ENCODE measurements at regions of chr5 and their contacts with region 1.

Region 1: DNA sequence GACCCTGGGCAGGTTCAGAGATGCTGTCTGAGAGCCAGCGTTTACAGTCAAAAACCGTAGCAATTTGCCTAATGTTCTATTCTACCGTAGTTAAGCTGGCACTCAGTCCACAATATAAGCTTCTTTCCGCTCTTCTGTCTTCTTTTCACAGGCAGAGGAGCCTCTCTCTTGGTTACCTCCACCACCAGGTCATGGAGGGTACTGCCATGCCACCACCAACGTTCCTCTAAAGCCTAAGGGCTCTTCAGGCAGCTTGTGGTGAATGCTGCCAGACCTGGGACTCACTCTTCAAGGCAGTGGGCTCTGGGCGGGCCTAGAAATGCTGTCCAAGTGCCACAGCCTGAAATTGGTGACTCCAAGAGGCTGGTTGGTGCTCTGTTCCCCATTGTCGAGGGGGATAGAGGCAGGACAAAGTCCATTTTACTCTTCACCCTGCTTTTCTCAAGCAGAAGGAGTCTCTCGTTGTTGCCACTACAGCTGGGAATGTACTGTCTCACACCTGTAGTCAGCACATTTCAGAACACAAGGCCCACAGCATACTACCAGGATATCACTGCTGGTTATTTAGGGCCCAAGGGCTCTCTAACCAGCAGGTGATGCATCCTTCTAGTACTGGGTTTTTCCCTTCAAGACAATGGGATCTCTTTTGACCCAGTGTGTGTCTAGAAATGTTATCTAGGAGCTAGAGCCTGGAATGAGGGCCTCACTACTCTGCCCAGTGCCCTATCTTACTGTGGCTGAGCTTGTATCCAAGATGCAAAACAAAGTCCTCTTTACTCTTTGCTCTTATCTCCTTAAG is 235.3 kb upstream of the PRR16 start:
- DNase-seq: no peak
- H3K4me3 ChIP-seq: no peak overlapping the region
- H3K27ac ChIP-seq: no peak overlapping the region
- H3K4me1 ChIP-seq: no peaks in the 10 kb centered on the region
- H3K27me3 ChIP-seq: no peaks in the 10 kb centered on the region
- CTCF ChIP-seq: no peak
- EP300 ChIP-seq: no peak
- POLR2A ChIP-seq: no peak

Region 2: DNA sequence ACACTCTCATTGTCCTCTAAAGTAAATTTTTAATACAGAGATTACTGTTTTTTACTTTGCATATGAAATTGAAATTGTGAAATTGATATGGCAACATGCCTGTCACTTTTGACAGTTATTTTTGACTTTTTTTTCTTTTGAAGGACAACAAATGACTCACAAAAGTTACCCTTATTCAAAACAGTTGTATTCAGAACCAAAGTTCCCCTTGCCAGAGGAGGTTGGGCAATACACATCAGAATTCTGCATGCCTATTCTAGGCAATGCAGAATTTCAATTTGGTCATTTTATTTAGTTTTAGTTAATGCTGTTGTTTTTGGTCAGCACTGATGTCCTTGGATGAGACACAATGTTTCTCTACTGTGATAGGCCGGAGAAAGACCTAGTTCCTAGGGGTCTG is 63.9 kb before region 1 on chr5:
- in situ Hi-C with region 1: no loop called
- intact Hi-C with region 1: loop called (anchors 2 kb)
- DNase-seq: no peak
- H3K4me3 ChIP-seq: no peak overlapping the region
- H3K27ac ChIP-seq: no peak overlapping the region
- H3K4me1 ChIP-seq: no peaks in the 10 kb centered on the region
- H3K27me3 ChIP-seq: no peaks in the 10 kb centered on the region
- CTCF ChIP-seq: no peak
- EP300 ChIP-seq: no peak
- POLR2A ChIP-seq: no peak